ENCODE measurements at regions of chr7 and their contacts with region 1.

Region 1: GRCh38 chr7:140673063-140673773 is 473 bp downstream of the ADCK2 start:
- DNase-seq: peak; percentile 69
- H3K4me3 ChIP-seq: peak overlapping the region; percentile 81
- H3K27ac ChIP-seq: peak overlapping the region; percentile 98
- H3K4me1 ChIP-seq: peaks cover 63% of the 10 kb centered on the region
- CTCF ChIP-seq: peak; percentile 29; the same call in 1 of the 2 replicates

Region 2: DNA sequence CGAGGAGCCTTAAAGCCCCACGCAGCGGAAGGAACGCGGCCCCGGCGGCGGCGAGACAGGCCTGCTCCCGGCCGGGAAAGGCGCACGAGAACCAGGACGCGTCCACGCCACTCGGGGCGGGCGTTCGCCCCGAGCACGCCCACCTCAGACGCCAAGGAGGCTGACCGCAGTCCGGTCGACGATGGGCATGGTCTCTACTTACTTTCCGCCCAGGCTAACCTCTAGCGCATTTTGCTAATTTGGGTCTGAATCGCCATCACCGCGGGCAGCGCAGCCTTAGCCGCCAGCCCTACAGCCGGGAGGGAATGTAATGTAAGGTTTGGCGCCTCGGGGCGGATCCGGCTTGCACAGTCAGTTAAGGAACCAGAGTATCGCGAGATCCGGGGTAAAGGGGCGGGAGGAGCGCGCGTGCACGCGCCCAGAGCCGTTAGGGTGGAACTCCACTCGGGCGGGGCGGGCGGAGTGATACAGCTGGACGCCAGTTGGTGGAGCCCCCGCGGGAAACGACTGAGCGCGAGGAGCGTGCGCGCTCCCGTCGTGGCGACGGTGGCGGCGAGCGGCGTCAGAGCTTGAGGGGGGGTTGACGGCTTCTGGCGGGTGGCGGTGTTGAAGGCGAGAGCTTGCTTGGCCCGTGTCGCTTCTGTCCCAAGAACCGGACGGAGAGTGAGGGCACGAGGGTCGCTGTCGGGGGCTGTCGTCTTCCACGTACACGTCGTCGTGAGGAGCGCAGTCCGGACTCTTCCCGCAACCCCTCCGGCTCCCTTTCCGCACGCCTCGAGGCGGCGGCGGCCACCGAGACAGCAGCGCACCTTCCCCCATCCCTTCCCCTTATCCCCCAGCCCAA is 1313.6 kb before region 1 on chr7 and contains the start of gene LUC7L2:
- CTCF ChIA-PET with region 1: no interaction called
- POLR2A ChIA-PET with region 1: no interaction called
- intact Hi-C with region 1: loop called (anchors 10 kb)
- DNase-seq: peak; percentile 99
- H3K4me3 ChIP-seq: peak within 1 kb of the TSS; percentile 90
- H3K27ac ChIP-seq: peak within 1 kb of the TSS; percentile 93
- H3K4me1 ChIP-seq: peaks cover 30% of the 10 kb centered on the region
- CTCF ChIP-seq: 0 out of 2 replicates have a peak, but pooled peaks have one; percentile 26
- total RNA-seq, gene LUC7L2: 79.6 and 94.9 TPM in 2 replicates

Region 3: GRCh38 chr7:140390466-140391190 is 282.6 kb before region 1 on chr7:
- CTCF ChIA-PET with region 1: no interaction called
- POLR2A ChIA-PET with region 1: no interaction called
- intact Hi-C with region 1: loop called (anchors 5 kb)
- DNase-seq: peak; percentile 65
- H3K4me3 ChIP-seq: no peak overlapping the region
- H3K27ac ChIP-seq: no peak overlapping the region
- H3K4me1 ChIP-seq: peaks cover 20% of the 10 kb centered on the region
- CTCF ChIP-seq: no peak

Region 4: GRCh38 chr7:140685407-140686078 is 12.3 kb after region 1 on chr7:
- CTCF ChIA-PET with region 1: no interaction called
- POLR2A ChIA-PET with region 1: interaction called, 26 read pairs
- intact Hi-C with region 1: no loop called
- DNase-seq: no peak
- H3K4me3 ChIP-seq: no peak overlapping the region
- H3K27ac ChIP-seq: no peak overlapping the region
- H3K4me1 ChIP-seq: no peaks in the 10 kb centered on the region
- CTCF ChIP-seq: no peak

Region 5: DNA sequence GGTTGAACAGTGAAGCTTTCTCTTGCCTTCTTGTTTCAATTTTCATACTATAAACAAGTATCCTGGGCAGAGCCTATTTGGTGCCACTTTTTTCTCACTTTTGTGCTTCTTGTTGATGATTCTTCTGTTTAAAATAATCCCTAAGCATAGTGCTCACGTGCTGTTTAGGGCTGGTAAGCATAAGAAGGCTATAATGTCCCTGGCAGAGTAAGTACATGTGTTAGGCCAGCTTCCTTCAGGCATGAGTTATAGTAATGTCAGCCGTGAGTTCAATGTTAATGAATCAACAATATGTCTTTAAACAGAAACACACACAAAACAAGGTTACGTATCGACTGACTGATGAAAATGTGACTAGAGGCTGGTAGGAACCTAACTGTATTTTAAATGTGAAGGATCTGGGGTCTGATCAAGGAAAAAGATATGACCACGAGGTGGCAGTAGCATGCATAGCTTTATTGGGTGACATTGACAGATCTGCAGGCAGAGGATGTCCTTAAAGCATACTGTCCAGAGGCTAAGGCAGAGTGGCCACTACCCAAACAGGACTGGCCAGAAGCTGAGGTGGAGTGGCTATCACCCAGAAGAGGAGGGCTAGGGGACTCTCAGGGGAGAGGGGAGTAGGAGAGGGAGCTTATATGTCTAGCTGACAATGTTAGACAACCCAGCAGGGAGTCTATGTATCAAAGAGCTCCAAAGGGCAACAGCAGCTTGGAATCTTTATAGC is 137.8 kb after region 1 on chr7:
- CTCF ChIA-PET with region 1: no interaction called
- POLR2A ChIA-PET with region 1: no interaction called
- intact Hi-C with region 1: loop called (anchors 5 kb)
- DNase-seq: peak; percentile 69
- H3K4me3 ChIP-seq: no peak overlapping the region
- H3K27ac ChIP-seq: no peak overlapping the region
- H3K4me1 ChIP-seq: no peaks in the 10 kb centered on the region
- CTCF ChIP-seq: peak; percentile 90